Activated naive CD4-positive, alpha-beta T cell treated with anti-CD3 and anti-CD28 coated beads for 36 hours (primary cell): ENCODE measurements at regions of chr1 and their contacts with region 1.

Region 1: DNA sequence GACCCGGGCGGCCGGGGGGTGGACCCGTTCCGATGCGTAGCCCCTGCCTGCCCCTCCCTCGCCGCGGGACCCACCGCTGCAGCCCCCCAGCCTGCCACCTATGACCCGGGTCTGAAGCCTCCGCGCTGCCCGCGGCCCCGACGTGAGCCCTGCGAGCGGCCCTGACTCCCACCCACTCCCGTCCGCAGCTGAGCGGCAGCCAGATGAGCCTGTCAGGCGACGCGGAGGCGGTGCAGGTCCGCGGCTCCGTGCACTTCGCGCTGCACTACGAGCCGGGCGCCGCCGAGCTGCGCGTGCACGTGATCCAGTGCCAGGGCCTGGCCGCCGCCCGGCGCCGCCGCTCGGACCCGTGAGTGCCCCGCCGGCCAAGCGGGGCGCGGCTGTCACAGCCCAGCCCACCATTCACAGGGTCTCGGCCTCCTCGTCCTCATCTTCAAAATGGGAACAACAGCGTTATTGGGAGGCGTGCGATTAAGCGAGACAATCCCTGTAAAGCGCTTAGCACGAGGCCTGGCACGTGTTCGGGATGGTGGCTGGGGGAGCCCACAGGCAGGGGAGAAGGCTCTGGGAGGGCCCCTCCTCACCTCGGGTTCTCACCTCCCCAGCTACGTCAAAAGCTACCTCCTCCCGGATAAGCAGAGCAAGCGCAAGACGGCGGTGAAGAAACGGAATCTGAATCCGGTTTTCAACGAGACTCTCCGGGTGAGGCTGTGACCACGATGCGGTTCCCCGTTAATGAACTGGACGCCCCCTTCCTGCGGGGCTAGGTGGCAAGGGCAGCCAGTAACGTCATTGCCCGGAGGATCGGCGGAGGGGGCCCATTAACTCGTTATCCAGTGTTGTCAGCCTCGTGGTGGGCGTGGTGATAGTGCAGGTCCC is 8.2 kb downstream of the SYTL1 start:
- DNase-seq: no peak
- H3K4me3 Mint-ChIP-seq: no peak overlapping the region
- H3K27ac Mint-ChIP-seq: no peak overlapping the region
- H3K4me1 Mint-ChIP-seq: peaks cover 4% of the 10 kb centered on the region
- H3K27me3 Mint-ChIP-seq: no peaks in the 10 kb centered on the region

Region 2: GRCh38 chr1:27332536-27333281 is 17.3 kb before region 1 on chr1:
- CTCF ChIA-PET with region 1: interaction called, 18 read pairs
- intact Hi-C with region 1: no loop called
- DNase-seq: peak; percentile 68
- H3K4me3 Mint-ChIP-seq: no peak overlapping the region
- H3K27ac Mint-ChIP-seq: no peak overlapping the region
- H3K4me1 Mint-ChIP-seq: peaks cover 26% of the 10 kb centered on the region
- H3K27me3 Mint-ChIP-seq: no peaks in the 10 kb centered on the region